Thyroid gland (tissue), 4 donors: ENCODE measurements at regions of chr10 and their contacts with region 1.

Region 1: GRCh38 chr10:103712570-103713498 is 142.5 kb downstream of the SH3PXD2A start:
- DNase-seq: peak; percentile 82 to 84
- H3K4me3 ChIP-seq: no peak overlapping the region
- H3K27ac ChIP-seq: no peak overlapping the region
- H3K4me1 ChIP-seq: no peaks in the 10 kb centered on the region
- H3K27me3 ChIP-seq: no peaks in the 10 kb centered on the region
- CTCF ChIP-seq: peak; percentile 72 to 95 (median 88)
- POLR2A ChIP-seq: no peak

Region 2: GRCh38 chr10:103859161-103860086 is 146.6 kb after region 1 on chr10:
- intact Hi-C with region 1: loop called (anchors 5 kb)
- DNase-seq: peak; percentile 47 to 52
- H3K4me3 ChIP-seq: no peak overlapping the region
- H3K27ac ChIP-seq: no peak overlapping the region
- H3K4me1 ChIP-seq: peaks cover 12 to 13% of the 10 kb centered on the region in 2 donors
- H3K27me3 ChIP-seq: no peaks in the 10 kb centered on the region
- CTCF ChIP-seq: peak in 5 of 6 experiments; percentile 16 to 68 (median 52)
- POLR2A ChIP-seq: no peak

Region 3: GRCh38 chr10:104368381-104368780 is 655.5 kb after region 1 on chr10:
- intact Hi-C with region 1: no loop called
- DNase-seq: no peak
- H3K4me3 ChIP-seq: no peak overlapping the region
- H3K27ac ChIP-seq: no peak overlapping the region
- H3K4me1 ChIP-seq: no peaks in the 10 kb centered on the region
- H3K27me3 ChIP-seq: no peaks in the 10 kb centered on the region
- CTCF ChIP-seq: no peak
- POLR2A ChIP-seq: no peak